AG04449 (cell line): ENCODE measurements at regions of chr3 and their contacts with region 1.

Region 1: GRCh38 chr3:25594007-25594502 is 70.7 kb downstream of the TOP2B start:
- DNase-seq: peak; percentile 73
- H3K4me3 ChIP-seq: no peak overlapping the region
- CTCF ChIP-seq: peak; percentile 29

Region 2: GRCh38 chr3:24773798-24774197 is 820.3 kb before region 1 on chr3:
- CTCF ChIA-PET with region 1: interaction called, 66 read pairs
- POLR2A ChIA-PET with region 1: no interaction called
- DNase-seq: peak; percentile 5
- H3K4me3 ChIP-seq: no peak overlapping the region
- CTCF ChIP-seq: peak; percentile 71

Region 3: GRCh38 chr3:25033407-25034029 is 560.5 kb before region 1 on chr3:
- CTCF ChIA-PET with region 1: interaction called, 60 read pairs
- POLR2A ChIA-PET with region 1: no interaction called
- DNase-seq: no peak
- H3K4me3 ChIP-seq: no peak overlapping the region
- CTCF ChIP-seq: peak; percentile 47

Region 4: DNA sequence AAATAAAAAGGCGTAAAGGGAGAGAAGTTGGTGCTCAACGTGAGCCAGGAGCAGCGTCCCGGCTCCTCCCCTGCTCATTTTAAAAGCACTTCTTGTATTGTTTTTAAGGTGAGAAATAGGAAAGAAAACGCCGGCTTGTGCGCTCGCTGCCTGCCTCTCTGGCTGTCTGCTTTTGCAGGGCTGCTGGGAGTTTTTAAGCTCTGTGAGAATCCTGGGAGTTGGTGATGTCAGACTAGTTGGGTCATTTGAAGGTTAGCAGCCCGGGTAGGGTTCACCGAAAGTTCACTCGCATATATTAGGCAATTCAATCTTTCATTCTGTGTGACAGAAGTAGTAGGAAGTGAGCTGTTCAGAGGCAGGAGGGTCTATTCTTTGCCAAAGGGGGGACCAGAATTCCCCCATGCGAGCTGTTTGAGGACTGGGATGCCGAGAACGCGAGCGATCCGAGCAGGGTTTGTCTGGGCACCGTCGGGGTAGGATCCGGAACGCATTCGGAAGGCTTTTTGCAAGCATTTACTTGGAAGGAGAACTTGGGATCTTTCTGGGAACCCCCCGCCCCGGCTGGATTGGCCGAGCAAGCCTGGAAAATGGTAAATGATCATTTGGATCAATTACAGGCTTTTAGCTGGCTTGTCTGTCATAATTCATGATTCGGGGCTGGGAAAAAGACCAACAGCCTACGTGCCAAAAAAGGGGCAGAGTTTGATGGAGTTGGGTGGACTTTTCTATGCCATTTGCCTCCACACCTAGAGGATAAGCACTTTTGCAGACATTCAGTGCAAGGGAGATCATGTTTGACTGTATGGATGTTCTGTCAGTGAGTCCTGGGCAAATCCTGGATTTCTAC is 165.9 kb before region 1 on chr3 and contains the start of gene RARB:
- CTCF ChIA-PET with region 1: interaction called, 54 read pairs
- POLR2A ChIA-PET with region 1: interaction called, 14 read pairs
- DNase-seq: peak; percentile 78
- H3K4me3 ChIP-seq: peak within 1 kb of the TSS; percentile 73
- CTCF ChIP-seq: no peak

Region 5: GRCh38 chr3:25468866-25469319 is 125.2 kb before region 1 on chr3:
- CTCF ChIA-PET with region 1: interaction called, 19 read pairs
- POLR2A ChIA-PET with region 1: no interaction called
- DNase-seq: peak; percentile 59
- H3K4me3 ChIP-seq: no peak overlapping the region
- CTCF ChIP-seq: peak; percentile 42

Region 6: DNA sequence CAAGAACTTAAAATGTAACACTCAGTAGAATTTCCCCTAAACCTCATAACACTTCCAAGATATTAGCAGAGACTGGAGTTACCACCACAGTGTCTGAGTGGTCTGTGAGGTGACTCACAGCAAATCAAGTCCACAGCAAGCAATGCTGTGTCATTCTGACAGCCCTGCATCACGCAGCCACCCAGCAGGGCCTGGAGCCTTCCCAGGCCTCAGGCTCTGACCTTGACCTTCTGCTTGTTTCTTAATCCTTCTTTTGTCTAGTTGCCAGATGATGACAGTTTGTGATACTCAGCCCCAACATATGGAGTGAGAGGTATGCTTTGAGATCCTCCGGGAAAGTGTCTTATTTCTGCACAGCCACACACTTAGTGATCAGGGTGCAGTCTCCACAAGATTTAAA is 11.8 kb before region 1 on chr3:
- CTCF ChIA-PET with region 1: interaction called, 41 read pairs
- POLR2A ChIA-PET with region 1: no interaction called
- DNase-seq: peak; percentile 67
- H3K4me3 ChIP-seq: no peak overlapping the region
- CTCF ChIP-seq: no peak